WTC11 (cell line): ENCODE measurements at regions of chr9 and their contacts with region 1.

Region 1: GRCh38 chr9:129131300-129132145 is 20.3 kb downstream of the PTPA start:
- DNase-seq: peak; percentile 91
- ATAC-seq: peak; percentile 82
- H3K4me3 Mint-ChIP-seq: no peak overlapping the region
- H3K27ac Mint-ChIP-seq: no peak overlapping the region
- H3K4me1 Mint-ChIP-seq: peaks cover 21% of the 10 kb centered on the region
- H3K27me3 Mint-ChIP-seq: no peaks in the 10 kb centered on the region
- CTCF ChIP-seq: peak; percentile 98

Region 2: GRCh38 chr9:129110740-129111527 is 20.6 kb before region 1 on chr9 and contains the starts of genes CRAT and PTPA:
- CTCF ChIA-PET with region 1: interaction called, 19 read pairs
- POLR2A ChIA-PET with region 1: interaction called, 5 read pairs
- DNase-seq: peak; percentile 97
- ATAC-seq: peak; percentile 85
- H3K4me3 Mint-ChIP-seq: peak within 1 kb of the TSS; percentile 93
- H3K27ac Mint-ChIP-seq: peak within 1 kb of the TSS; percentile 99
- H3K4me1 Mint-ChIP-seq: peaks cover 24% of the 10 kb centered on the region
- H3K27me3 Mint-ChIP-seq: peaks cover 17% of the 10 kb centered on the region
- CTCF ChIP-seq: no peak
- total RNA-seq, gene CRAT: 17.2 to 19.1 TPM (median 17.5 TPM) in 3 replicates
- total RNA-seq, gene PTPA: 181 to 186 TPM (median 186 TPM) in 3 replicates

Region 3: DNA sequence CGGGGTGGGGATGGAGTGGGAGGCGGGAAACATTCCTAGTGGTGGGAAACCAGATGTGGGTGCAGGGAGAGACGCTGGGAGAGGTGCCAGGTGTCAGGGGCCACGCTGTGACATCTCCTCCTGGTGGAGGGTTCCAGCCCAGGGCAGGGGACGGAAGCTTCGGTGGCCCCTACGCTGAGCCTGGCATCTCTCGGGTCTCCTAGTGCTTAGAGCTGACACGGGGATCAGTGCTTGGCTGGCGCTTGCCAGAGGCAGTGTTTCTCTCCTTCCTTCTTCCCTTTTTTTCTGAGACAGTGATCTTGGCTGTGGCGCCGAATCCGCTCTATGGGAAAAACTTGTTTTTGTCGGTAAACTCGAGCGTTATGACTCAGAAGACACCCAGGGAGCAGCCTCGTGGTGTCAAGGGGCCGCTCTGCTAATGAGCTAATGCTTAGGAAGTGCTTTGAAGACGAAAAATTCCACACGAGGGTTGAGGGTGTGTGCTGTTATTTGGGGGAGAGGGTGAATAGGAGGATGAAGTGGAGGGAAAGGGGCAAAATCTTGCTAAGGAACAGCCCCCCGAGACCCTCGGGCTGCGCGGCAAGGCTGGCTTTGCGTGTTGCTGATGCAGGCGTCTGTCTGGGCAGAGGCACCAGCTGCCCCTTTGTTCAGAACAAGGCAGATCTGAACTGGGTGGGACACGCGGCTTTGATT is 66.9 kb after region 1 on chr9:
- CTCF ChIA-PET with region 1: interaction called, 13 read pairs
- POLR2A ChIA-PET with region 1: no interaction called
- DNase-seq: no peak
- ATAC-seq: no peak
- H3K4me3 Mint-ChIP-seq: no peak overlapping the region
- H3K27ac Mint-ChIP-seq: no peak overlapping the region
- H3K4me1 Mint-ChIP-seq: peaks cover 18% of the 10 kb centered on the region
- H3K27me3 Mint-ChIP-seq: peaks cover 40% of the 10 kb centered on the region
- CTCF ChIP-seq: no peak

Region 4: DNA sequence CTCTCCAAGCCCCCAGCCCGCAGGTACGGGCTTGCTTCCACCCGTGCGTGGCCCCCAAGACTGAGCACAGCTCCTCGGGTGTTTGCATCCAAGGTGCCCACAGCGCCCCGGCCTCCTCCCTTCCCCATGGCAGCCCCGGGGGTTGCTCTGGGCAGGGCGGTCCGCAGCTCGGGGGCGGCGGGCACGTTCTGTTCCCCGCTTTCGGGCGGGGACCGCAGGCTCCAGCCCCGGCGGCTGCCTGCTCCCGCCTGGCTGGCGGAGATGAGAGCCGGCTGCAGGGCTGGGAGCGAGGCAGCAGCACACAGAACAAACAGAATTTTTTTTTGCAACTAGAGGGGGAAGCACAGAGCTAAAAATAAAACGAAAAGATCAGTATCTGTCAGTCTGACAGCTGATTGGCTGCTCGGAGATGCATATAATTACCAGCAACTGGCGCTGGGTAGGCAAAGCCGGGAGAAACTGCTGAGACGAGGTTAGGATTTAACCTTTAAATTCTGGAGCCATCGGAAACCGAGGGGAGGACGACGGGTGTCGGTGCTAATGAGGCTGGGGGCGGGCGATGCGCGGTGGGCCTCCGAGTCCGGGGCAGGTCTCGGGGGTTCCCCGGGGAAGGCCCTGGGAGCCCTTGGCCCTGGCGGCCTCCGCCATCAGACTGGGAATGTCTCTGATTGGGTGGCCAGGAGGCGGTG is 189.2 kb after region 1 on chr9:
- CTCF ChIA-PET with region 1: interaction called, 10 read pairs
- POLR2A ChIA-PET with region 1: no interaction called
- DNase-seq: peak; percentile 44
- ATAC-seq: peak; percentile 33
- H3K4me3 Mint-ChIP-seq: peak overlapping the region; percentile 50
- H3K27ac Mint-ChIP-seq: no peak overlapping the region
- H3K4me1 Mint-ChIP-seq: peaks cover 22% of the 10 kb centered on the region
- H3K27me3 Mint-ChIP-seq: no peaks in the 10 kb centered on the region
- CTCF ChIP-seq: no peak

Region 5: DNA sequence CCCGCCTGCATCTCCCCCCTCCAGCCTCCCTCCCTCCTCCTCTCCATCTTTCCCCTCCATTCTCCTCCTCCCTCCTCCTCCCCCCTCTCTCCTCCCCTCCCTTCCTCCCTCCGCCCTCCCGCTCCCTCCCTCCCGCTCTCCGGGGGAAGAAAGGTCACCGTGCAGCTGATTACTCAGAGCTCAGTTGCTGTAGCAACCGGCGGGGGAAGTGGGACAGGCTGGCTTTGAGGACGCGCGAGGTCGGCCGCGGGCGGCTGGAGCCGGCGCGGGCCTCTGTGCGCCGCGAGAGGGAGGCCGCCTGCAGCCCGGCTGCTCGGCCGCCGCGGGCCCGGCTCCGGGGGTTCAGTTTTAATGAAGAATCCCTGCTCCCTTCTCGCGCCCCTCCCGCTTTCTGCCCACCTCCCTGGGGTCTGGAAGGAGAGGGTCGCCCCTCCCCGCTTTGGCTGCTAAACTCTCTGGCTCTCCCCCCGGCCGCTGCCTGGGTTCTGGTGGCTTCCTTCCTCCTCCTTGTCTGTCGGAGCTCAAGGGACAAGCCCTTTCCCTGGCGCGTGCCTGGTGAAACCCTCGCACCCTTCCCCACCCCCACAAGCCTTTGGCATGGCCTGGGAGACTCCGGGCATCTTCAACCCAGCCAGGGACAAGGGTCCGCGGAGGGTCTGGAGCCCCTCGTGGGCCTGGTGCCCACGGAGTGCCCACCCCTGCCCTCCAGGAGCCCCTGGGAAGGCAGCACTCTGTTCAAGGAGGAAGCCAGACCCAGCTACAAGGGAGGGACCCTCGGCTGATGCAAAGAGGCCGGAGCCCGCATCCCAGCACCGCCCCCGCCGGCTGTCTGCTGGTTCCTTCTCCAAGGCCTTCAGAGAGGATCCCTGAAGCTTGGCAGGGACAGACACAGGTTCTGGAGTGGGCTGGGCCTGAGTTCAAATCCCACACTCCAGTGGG is 329.1 kb after region 1 on chr9:
- CTCF ChIA-PET with region 1: interaction called, 12 read pairs
- POLR2A ChIA-PET with region 1: no interaction called
- DNase-seq: peak; percentile 82
- ATAC-seq: peak; percentile 69
- H3K4me3 Mint-ChIP-seq: peak overlapping the region; percentile 76
- H3K27ac Mint-ChIP-seq: no peak overlapping the region
- H3K4me1 Mint-ChIP-seq: peaks cover 23% of the 10 kb centered on the region
- H3K27me3 Mint-ChIP-seq: peaks cover 22% of the 10 kb centered on the region
- CTCF ChIP-seq: no peak

Region 6: DNA sequence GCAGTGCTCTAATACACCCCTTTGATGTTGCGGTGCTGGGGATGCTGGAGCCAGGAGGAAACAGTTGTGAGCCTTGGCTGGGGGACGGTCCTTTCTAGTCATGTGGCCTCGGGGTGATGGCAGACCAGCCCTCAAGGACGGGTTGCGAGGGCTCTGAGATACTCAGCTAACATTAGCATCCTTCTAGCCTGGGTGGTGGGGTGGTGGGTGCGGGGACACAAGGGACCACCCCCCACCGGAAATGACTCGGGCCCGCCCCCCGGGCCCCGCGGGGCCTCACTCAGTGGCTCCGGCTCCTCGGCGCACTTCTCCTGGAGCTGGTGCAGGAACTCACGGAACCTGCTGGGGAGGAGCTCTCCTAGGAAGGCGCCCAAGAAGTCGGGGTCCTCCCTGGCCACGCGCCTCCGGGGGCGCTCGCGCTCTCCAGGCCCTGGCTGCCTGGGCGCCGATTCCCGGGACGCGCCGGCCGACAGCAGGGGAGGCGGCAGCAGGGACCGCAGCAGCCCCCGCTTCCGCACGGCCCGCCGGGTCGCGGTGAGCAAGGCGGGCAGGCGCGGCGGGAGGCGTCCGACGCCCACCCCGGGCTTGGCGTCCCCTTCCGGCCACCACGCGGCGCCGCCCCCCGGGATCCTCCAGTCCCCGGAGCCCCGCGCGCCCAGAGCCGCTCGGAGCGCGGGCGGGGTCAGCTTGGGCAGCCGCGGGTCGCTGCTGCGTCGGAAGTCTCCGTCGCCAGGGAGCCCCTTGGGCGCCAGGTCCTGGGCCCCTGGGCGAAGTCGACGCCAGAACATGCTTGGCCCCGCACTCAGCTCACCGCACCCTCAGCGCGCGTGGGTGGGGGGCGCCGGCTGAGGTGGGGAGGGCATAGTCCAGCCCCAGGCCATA is 488.5 kb after region 1 on chr9:
- CTCF ChIA-PET with region 1: interaction called, 62 read pairs
- POLR2A ChIA-PET with region 1: no interaction called
- DNase-seq: no peak
- ATAC-seq: peak; percentile 33
- H3K4me3 Mint-ChIP-seq: peak overlapping the region; percentile 62
- H3K27ac Mint-ChIP-seq: no peak overlapping the region
- H3K4me1 Mint-ChIP-seq: peaks cover 14% of the 10 kb centered on the region
- H3K27me3 Mint-ChIP-seq: peaks cover 50% of the 10 kb centered on the region
- CTCF ChIP-seq: no peak